Activated T-helper 1 cell treated with anti-CD3 and anti-CD28 coated beads, Interleukin-12 subunit alpha, Interleukin-12 subunit beta, Interleukin-2, Interleukin-4 antibody, amounts not matched to agents 30 ng/mL and 10 ng/mL and 1 ng/mL, durations not matched to agents 14 hours and 24 hours and 36 hours (primary cell): ENCODE measurements at regions of chr17 and their contacts with region 1.

Region 1: GRCh38 chr17:28598799-28599310 is at the start of gene SPAG5:
- DNase-seq: peak; percentile 96
- H3K4me3 Mint-ChIP-seq: peak within 1 kb of the TSS; percentile 96
- H3K27ac Mint-ChIP-seq: peak within 1 kb of the TSS; percentile 98
- H3K4me1 Mint-ChIP-seq: peaks cover 26% of the 10 kb centered on the region
- H3K27me3 Mint-ChIP-seq: no peaks in the 10 kb centered on the region
- total RNA-seq, gene SPAG5: 81.9 and 83.1 TPM in 2 replicates

Region 2: GRCh38 chr17:28371245-28372202 is 227.3 kb before region 1 on chr17 and contains the start of gene SARM1:
- intact Hi-C with region 1: loop called (anchors 5 kb)
- DNase-seq: peak; percentile 85
- H3K4me3 Mint-ChIP-seq: peak within 1 kb of the TSS; percentile 95
- H3K27ac Mint-ChIP-seq: peak within 1 kb of the TSS; percentile 98
- H3K4me1 Mint-ChIP-seq: peaks cover 14% of the 10 kb centered on the region
- H3K27me3 Mint-ChIP-seq: no peaks in the 10 kb centered on the region
- total RNA-seq, gene SARM1: 40.7 and 45.6 TPM in 2 replicates

Region 3: GRCh38 chr17:28552246-28552999 is 46.4 kb before region 1 on chr17 and contains the start of gene UNC119:
- intact Hi-C with region 1: loop called (anchors 1 kb)
- DNase-seq: peak; percentile 70
- H3K4me3 Mint-ChIP-seq: peak within 1 kb of the TSS; percentile 94
- H3K27ac Mint-ChIP-seq: peak within 1 kb of the TSS; percentile 91
- H3K4me1 Mint-ChIP-seq: peaks cover 66% of the 10 kb centered on the region
- H3K27me3 Mint-ChIP-seq: no peaks in the 10 kb centered on the region
- total RNA-seq, gene UNC119: 63.3 and 63.9 TPM in 2 replicates

Region 4: DNA sequence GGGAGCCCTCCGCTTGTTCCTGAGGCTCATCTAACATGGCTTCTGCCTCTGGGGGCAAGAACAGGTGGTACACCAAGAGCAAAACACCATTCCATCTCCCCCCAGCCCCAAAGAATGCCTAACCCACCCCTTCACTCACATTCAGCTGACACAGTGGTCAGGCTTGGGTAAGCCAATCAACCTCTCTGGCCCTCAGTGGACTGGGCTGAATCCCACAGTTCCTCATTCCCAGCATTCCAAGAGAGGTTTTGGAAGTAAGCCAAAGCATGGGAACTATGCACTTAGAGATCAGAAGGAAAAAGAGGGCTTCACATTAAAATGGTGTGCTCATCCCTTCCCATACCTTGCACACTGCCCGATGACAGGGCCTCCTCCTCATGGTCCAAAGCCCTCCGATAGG is 35.4 kb before region 1 on chr17:
- intact Hi-C with region 1: no loop called
- DNase-seq: no peak
- H3K4me3 Mint-ChIP-seq: no peak overlapping the region
- H3K27ac Mint-ChIP-seq: no peak overlapping the region
- H3K4me1 Mint-ChIP-seq: peaks cover 27% of the 10 kb centered on the region
- H3K27me3 Mint-ChIP-seq: no peaks in the 10 kb centered on the region

Region 5: DNA sequence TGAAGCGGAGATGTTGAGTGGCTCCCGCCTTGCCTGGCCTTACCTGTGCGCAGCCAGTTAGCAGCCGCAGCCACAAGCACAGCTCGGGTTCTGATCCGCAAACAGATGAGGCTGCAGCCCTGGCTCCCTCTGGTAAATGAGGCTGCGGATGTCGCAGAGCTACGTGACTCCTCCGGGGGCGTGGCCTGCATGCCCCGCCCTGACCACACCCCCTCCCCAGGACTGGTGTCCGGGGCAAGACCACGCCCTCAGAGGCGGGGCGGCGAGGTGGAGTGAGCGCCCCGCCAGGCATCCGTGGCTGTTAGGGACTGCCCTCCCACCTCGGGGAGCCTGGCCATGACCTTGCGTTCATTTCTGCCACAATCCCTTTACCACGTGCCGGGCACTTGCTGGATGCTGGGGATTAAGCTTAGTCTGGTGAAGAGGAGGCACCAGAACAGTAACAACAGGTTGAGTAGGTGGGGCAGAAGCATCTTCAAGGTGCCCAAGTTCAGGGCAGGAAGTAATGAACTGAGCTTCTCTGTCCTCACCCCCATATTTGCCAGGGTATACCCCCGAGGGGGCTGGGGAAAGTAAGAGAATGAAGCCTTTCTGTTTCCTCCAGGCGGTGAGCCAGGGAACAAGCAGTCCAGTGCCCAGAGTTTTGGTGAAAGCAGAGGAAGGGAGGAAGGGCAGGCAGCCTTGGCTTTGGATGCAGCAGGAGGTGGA is 21.9 kb before region 1 on chr17 and contains the start of gene ALDOC:
- intact Hi-C with region 1: loop called (anchors 1 kb)
- DNase-seq: peak; percentile 98
- H3K4me3 Mint-ChIP-seq: peak within 1 kb of the TSS; percentile 86
- H3K27ac Mint-ChIP-seq: peak within 1 kb of the TSS; percentile 94
- H3K4me1 Mint-ChIP-seq: peaks cover 79% of the 10 kb centered on the region
- H3K27me3 Mint-ChIP-seq: no peaks in the 10 kb centered on the region
- total RNA-seq, gene ALDOC: 44.0 and 47.6 TPM in 2 replicates

Region 6: GRCh38 chr17:28644985-28645939 is 46.4 kb after region 1 on chr17 and contains the start of gene BLTP2:
- intact Hi-C with region 1: loop called (anchors 1 kb)
- DNase-seq: peak; percentile 95
- H3K4me3 Mint-ChIP-seq: peak within 1 kb of the TSS; percentile 91
- H3K27ac Mint-ChIP-seq: peak within 1 kb of the TSS; percentile 82
- H3K4me1 Mint-ChIP-seq: peaks cover 33% of the 10 kb centered on the region
- H3K27me3 Mint-ChIP-seq: no peaks in the 10 kb centered on the region
- total RNA-seq, gene BLTP2: 210 and 212 TPM in 2 replicates

Region 7: DNA sequence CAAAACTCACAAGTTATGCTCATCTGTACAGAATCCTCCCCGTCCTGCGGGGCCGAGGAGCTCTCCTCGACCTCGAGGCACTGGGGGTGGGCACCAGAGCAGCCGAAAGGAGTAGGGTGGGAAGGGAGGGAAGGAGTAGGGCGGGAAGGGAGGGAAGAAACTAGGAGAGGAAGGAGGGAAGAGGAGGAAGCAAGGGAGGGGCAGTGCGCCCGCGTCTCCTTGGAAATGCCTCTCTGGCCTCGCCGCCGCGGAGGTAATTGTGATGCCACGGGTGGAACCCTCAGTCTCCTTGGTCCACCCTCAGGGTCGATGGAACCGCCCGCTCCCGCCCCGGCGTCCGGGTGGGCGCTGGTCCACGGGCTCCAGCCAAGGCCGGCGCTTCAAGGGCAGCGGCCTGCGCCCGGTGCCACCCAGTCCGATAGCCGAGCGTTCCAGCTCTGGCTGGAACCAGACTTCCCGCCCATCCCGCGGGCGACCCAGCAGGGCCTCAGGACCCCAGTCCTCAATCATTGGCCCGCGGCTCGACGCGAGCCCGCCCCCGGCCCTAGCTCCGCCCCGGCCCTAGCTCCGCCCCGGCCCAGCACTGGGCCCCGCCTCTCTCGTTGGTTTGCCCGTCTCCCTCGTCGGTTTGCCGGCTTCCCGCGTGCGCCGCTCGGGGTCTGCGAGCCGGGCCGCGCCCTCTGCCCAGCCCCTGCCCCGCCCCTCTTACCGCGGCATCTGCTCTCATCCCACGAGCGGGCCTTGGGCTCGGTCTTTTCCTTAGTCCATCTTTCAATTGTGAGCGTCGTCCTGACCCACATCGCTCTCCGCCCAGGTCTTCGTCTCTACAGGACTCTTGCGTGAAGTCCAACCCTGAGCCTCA is 112.2 kb after region 1 on chr17:
- intact Hi-C with region 1: loop called (anchors 1 kb)
- DNase-seq: peak; percentile 92
- H3K4me3 Mint-ChIP-seq: peak overlapping the region; percentile 89
- H3K27ac Mint-ChIP-seq: peak overlapping the region; percentile 92
- H3K4me1 Mint-ChIP-seq: peaks cover 20% of the 10 kb centered on the region
- H3K27me3 Mint-ChIP-seq: peaks cover 16% of the 10 kb centered on the region